Mammary epithelial cell (primary cell): ENCODE measurements at regions of chr20 and their contacts with region 1.

Region 1: DNA sequence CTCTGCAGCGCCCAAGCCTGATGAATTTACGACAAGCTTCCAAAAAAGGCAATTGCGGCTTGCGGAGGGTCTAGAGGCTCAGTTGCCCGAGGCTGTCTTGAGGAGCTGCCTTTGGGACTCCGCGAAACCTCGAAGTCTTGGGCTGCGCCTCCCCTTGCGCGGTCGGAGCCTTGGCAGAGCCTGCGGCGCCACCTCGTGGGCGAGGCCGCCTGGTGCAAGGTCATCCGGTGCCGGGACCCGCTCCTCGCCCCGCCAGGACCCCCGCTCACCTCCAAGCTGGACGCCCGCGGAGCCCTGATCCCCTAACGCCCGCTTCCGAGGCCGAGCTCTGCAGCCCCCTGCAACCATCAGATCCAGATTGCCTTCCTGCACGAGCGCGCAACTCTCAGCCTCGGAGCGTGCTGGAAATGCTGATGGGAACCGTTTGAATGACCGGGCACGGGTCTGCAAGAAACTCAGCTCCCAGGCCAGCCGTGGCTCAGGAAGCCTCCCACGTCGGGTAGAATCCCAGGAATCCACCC is 14.9 kb upstream of the FAM210B start:
- DNase-seq: peak; percentile 27
- H3K4me3 ChIP-seq: peak overlapping the region in 2 of 3 experiments; percentile 26 to 42
- H3K27ac ChIP-seq: no peak overlapping the region
- H3K4me1 ChIP-seq: peaks cover 3% of the 10 kb centered on the region
- H3K27me3 ChIP-seq: no peaks in the 10 kb centered on the region
- CTCF ChIP-seq: peak; percentile 70 to 92

Region 2: DNA sequence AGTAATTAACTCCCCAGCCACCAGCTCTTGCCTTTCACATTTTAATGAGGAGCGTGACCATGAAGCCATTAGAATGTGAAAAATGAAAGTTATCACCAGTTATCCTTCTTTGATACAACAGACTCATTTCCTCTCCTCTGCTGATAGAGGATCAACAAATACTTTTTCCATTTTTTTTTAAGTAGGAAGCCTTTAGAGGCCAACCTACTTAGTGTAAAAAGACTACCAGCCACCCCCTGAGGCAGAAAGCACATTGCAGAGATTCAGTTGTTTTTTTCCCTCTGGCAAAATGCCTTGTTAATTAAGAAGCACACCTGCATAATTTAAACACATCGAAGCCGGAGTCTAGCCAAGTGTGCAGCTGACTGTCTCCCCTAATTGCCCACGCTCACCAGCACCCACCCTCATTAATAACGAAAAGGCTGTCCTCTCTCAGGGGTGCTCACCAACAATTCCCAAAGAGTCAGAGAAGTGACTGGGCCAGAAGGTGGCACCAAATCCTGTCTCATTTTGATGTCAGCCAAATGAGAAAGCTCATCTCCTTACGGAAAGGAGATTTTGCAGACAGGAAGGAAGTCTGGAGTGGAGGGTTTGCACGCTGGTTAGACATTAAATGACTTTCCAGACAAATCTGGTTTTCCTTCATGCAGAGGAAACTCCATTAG is 156.3 kb before region 1 on chr20:
- CTCF ChIA-PET with region 1: interaction called, 3 read pairs
- dilution Hi-C with region 1: no loop called
- in situ Hi-C with region 1: no loop called
- intact Hi-C with region 1: loop called (anchors 1 kb)
- DNase-seq: peak; percentile 21
- H3K4me3 ChIP-seq: no peak overlapping the region
- H3K27ac ChIP-seq: no peak overlapping the region
- H3K4me1 ChIP-seq: no peaks in the 10 kb centered on the region
- H3K27me3 ChIP-seq: no peaks in the 10 kb centered on the region
- CTCF ChIP-seq: peak; percentile 38 to 60

Region 3: DNA sequence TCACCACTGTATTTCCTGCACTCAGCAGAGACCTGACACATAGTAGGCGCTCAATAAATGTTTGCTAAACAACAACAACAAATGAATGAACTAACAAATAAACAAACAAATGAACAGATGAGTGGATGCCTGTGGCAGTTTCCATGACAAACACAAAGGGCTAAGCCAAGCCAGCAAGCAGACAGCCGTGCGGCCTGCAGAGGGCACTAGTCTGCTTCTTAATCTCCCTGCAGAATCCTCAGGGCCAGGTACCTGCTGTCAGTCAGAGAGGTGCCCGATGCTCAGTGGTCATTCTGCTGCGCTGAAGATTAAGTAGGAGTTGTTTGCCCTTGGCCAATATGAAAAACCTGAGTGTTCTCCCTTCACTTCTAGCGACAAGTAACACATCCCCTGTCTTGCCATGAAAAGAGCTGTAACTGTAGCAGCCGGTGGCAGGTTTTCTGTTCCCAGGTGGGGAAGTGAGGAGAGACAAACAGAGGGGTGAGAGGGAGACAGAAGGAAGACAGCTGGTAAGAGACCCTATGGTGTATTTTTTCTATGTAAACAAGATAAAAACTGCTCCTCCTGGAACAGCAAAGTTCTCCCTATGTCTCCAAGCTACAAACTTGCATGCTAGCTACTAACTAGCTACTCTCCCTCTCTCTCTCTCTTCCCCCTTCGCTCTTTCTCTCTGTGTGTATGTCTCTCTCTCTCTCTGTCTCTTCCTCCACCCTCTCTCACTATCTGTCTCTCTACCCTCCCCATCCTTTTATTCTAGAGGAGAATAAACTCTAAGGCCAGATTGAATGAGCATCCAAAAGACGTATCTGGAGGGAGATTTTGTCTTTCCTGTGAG is 95.8 kb before region 1 on chr20 and contains the start of gene MC3R:
- CTCF ChIA-PET with region 1: interaction called, 5 read pairs
- dilution Hi-C with region 1: no loop called
- in situ Hi-C with region 1: loop called in 1 of 2 experiments (anchors 5 kb)
- intact Hi-C with region 1: loop called (anchors 1 kb)
- DNase-seq: peak; percentile 39
- H3K4me3 ChIP-seq: no peak within 1 kb of the TSS
- H3K27ac ChIP-seq: no peak within 1 kb of the TSS
- H3K4me1 ChIP-seq: peaks cover 8% of the 10 kb centered on the region
- H3K27me3 ChIP-seq: peaks cover 16% of the 10 kb centered on the region
- CTCF ChIP-seq: peak; percentile 91 to 96
- total RNA-seq, gene MC3R: not detected